ENCODE measurements at regions of chr4 and their contacts with region 1.

Region 1: DNA sequence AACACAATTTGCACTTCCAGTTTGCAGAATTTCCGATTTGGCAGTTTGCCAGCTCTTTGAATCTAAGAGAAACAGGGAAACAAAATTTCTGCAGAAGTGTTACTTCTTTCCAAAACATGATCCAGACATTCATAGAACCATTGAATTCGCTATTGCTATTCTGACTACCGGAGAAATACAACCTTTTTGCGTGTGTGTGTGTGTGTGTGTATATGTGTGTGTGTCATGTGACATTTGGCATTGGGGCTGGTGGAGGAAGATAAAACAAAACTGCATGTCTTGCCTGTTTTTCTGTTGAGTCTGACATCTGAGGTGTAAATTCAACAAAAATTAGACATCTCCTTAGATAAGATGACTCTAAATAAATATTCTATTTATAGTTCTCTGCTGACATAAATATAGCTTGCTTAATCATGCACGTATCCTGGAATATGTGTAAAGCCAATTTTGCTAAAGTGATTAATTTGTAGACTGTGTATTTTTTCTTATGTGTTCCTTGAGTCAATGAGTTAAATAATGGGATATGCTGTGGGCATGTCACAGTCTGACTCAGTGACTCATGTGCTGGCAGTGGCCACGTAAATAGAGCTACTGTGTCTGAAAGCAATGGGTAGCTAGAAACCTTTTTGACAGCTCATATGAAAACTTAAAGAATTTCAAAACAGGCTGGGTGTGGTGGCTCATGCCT is 98.9 kb downstream of the HPGD start:
- DNase-seq: peak; percentile 93
- H3K4me3 Mint-ChIP-seq: peak overlapping the region; percentile 54
- H3K27ac Mint-ChIP-seq: peak overlapping the region; percentile 69
- H3K4me1 Mint-ChIP-seq: peaks cover 12% of the 10 kb centered on the region
- H3K27me3 Mint-ChIP-seq: no peaks in the 10 kb centered on the region
- CTCF ChIP-seq: no peak

Region 2: GRCh38 chr4:173807347-173807746 is 616.1 kb before region 1 on chr4:
- CTCF ChIA-PET with region 1: no interaction called
- POLR2A ChIA-PET with region 1: no interaction called
- intact Hi-C with region 1: no loop called
- DNase-seq: no peak
- H3K4me3 Mint-ChIP-seq: no peak overlapping the region
- H3K27ac Mint-ChIP-seq: no peak overlapping the region
- H3K4me1 Mint-ChIP-seq: no peaks in the 10 kb centered on the region
- H3K27me3 Mint-ChIP-seq: peaks cover 64% of the 10 kb centered on the region
- CTCF ChIP-seq: no peak

Region 3: GRCh38 chr4:174214101-174214878 is 209.1 kb before region 1 on chr4:
- CTCF ChIA-PET with region 1: no interaction called
- POLR2A ChIA-PET with region 1: no interaction called
- intact Hi-C with region 1: no loop called
- DNase-seq: no peak
- H3K4me3 Mint-ChIP-seq: no peak overlapping the region
- H3K27ac Mint-ChIP-seq: no peak overlapping the region
- H3K4me1 Mint-ChIP-seq: peaks cover 6% of the 10 kb centered on the region
- H3K27me3 Mint-ChIP-seq: peaks cover 13% of the 10 kb centered on the region
- CTCF ChIP-seq: no peak

Region 4: GRCh38 chr4:174398728-174399127 is 24.7 kb before region 1 on chr4:
- CTCF ChIA-PET with region 1: interaction called, 3 read pairs
- POLR2A ChIA-PET with region 1: interaction called, 14 read pairs
- intact Hi-C with region 1: no loop called
- DNase-seq: peak; percentile 85
- H3K4me3 Mint-ChIP-seq: no peak overlapping the region
- H3K27ac Mint-ChIP-seq: peak overlapping the region; percentile 86
- H3K4me1 Mint-ChIP-seq: peaks cover 51% of the 10 kb centered on the region
- H3K27me3 Mint-ChIP-seq: no peaks in the 10 kb centered on the region
- CTCF ChIP-seq: no peak

Region 5: DNA sequence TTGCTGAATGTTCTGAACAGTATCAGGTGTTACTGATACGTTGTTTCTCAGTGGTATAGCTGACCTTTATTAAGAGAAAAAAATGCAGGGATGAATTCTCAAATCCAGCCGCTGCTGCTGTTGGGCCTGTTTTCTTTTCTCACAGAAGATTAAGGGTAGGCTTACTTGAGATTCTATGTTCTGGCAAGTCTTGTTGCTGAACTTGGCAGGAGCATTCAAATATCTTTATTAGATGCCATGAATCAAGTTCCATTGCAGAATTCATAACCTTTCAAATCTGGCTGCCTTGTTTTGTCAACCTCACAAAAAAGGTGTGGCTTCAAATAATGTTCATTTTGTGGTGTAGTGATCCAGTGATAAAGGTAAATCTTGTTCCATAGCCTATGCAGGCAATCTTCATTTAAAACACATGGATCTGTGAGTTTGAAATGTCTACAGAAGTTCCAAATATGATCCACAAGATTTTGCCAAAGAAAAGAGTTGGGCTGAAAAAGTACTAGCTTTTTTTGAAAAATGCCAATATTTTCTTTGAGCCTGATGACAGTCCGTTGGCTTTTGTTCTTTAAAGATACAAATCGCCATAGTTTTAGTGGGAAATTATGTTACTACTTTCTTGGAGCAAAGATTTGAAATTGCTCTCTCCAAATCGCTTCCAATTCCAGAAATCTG is 27.2 kb after region 1 on chr4:
- CTCF ChIA-PET with region 1: no interaction called
- POLR2A ChIA-PET with region 1: interaction called, 10 read pairs
- intact Hi-C with region 1: no loop called
- DNase-seq: no peak
- H3K4me3 Mint-ChIP-seq: no peak overlapping the region
- H3K27ac Mint-ChIP-seq: no peak overlapping the region
- H3K4me1 Mint-ChIP-seq: peaks cover 8% of the 10 kb centered on the region
- H3K27me3 Mint-ChIP-seq: no peaks in the 10 kb centered on the region
- CTCF ChIP-seq: no peak

Region 6: DNA sequence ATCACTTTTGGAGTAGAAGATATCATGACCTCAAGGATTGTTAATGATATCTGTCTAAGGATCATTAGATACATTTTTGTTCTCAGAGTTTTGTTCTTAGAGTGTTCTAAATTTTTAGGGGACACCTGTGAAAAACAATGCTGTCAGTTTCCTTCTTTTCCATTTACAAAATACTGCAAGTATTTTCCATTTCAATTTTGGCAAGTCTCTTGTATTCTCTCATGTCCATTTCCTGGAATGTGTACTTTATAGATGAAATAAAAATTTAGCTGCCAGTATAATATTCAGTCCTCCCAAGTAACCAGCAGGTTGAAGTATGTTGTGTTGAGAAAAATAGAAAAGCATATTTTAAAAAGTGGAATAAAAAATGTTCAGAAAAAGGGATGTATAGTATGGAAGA is 216.7 kb after region 1 on chr4:
- CTCF ChIA-PET with region 1: no interaction called
- POLR2A ChIA-PET with region 1: no interaction called
- intact Hi-C with region 1: no loop called
- DNase-seq: no peak
- H3K4me3 Mint-ChIP-seq: no peak overlapping the region
- H3K27ac Mint-ChIP-seq: no peak overlapping the region
- H3K4me1 Mint-ChIP-seq: no peaks in the 10 kb centered on the region
- H3K27me3 Mint-ChIP-seq: no peaks in the 10 kb centered on the region
- CTCF ChIP-seq: no peak